ENCODE measurements at regions of chr12 and their contacts with region 1.

Region 1: DNA sequence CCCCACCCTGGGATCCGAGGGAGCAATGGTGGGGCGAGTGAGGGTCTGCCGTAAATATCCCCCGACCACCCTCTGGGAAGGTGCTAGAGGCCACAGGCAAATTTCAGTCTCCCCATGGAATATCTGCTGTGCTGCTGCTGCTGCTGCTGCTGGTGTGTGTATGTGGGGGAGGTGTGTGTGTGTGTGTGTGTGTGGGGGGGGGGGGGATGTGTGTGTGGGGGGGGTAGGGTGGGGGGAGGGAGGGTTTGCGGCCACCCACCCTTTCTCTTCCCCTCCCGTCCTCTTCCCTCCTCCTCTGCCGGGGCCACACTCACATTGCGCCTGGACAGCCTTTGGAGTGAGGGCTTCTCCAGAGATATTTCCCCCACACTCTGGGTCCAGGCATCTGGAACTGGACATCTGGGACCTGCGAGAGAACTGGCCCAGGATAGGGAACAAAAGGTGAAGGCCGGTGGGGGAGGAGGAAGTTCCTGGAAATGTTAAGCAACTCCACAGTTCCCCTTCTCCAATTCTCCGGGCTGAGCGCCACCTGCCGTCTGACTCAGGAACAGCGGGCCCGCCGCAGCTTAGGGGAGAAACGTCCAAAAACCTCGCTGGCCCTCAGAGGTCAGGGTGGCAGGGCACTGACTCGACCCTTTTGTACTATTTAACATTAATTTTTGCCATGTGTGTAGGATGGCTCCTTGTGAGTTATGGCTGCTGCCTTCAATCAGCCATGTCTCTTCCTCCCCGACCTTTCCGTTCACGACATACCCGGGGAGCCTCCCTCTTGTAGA is at the start of gene C1RL:
- DNase-seq: peak; percentile 77
- CTCF ChIP-seq: peak; percentile 94

Region 2: DNA sequence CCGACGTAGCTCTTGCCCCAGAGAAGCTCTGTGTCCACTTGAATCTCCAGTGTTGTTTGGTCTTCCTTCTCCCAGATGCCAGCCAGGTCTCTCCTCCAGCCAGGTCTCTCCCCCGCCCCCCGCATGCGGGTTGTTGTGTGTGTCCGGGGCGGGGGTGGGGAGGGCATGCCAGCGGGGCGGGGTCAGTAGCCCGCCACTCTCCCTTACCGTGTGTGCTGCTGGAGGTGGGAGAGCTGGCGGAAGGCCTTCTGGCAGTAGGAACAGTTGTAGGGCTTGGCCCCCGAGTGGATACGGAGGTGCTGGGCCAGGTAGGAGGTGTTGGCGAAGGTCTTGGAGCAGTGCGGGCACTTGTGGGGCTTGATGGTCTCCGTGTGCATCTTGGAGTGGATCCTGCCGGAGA is 436.8 kb before region 1 on chr12:
- in situ Hi-C with region 1: no loop called
- DNase-seq: no peak
- CTCF ChIP-seq: no peak

Region 3: GRCh38 chr12:6684609-6685008 is 424.4 kb before region 1 on chr12:
- in situ Hi-C with region 1: no loop called
- DNase-seq: no peak
- CTCF ChIP-seq: peak; percentile 35

Region 4: GRCh38 chr12:6937481-6938297 is 171.3 kb before region 1 on chr12:
- in situ Hi-C with region 1: loop called (anchors 25 kb)
- DNase-seq: peak; percentile 90
- CTCF ChIP-seq: peak; percentile 99

Region 5: DNA sequence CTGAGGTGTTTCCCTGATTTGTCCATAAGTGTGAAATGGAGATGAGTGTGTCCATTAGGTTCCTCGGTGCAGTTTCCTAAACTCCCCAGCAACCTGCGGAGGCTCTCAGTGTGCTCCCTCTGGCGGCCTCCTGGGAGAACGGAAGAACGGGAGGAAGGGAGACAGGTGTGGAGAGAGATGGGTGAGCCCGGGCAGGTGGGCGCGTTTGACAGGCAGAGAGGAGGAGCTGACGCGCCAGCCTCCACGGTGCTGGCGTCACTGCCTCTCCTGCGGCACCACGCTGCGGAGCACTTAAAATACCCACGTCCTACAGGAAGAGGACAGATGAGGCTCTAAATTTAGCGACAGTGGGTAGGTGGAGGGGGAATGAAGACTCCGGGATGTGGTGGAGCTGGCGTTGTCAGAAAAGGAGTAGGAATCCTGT is 53.7 kb after region 1 on chr12:
- in situ Hi-C with region 1: no loop called
- DNase-seq: peak; percentile 40
- CTCF ChIP-seq: peak; percentile 27